GM12878 (cell line): ENCODE measurements at regions of chr3 and their contacts with region 1.

Region 1: GRCh38 chr3:141311496-141312353 is 56.6 kb upstream of the ZBTB38 start:
- DNase-seq: peak; percentile 92
- ATAC-seq: peak; percentile 96
- H3K4me3 ChIP-seq: peak overlapping the region; percentile 79
- H3K27ac ChIP-seq: peak overlapping the region; percentile 85
- H3K4me1 ChIP-seq: peaks cover 18% of the 10 kb centered on the region
- H3K27me3 ChIP-seq: no peaks in the 10 kb centered on the region
- CTCF ChIP-seq: peak; percentile 79 to 95 (median 81)
- EP300 ChIP-seq: no peak
- POLR2A ChIP-seq: peak; percentile 95
- RAD21 ChIP-seq: peak; percentile 83

Region 2: GRCh38 chr3:141336672-141337522 is 25.2 kb after region 1 on chr3:
- CTCF ChIA-PET with region 1: interaction called, 83 read pairs
- POLR2A ChIA-PET with region 1: interaction called, 8 read pairs
- RAD21 ChIA-PET with region 1: interaction called, 53 read pairs
- SMC1A ChIA-PET with region 1: interaction called, 112 read pairs
- in situ Hi-C with region 1: no loop called
- intact Hi-C with region 1: loop called (anchors 1 kb)
- DNase-seq: peak; percentile 95
- ATAC-seq: peak; percentile 90
- H3K4me3 ChIP-seq: peak overlapping the region; percentile 33
- H3K27ac ChIP-seq: peak overlapping the region; percentile 95
- H3K4me1 ChIP-seq: peaks cover 45% of the 10 kb centered on the region
- H3K27me3 ChIP-seq: no peaks in the 10 kb centered on the region
- CTCF ChIP-seq: no peak
- EP300 ChIP-seq: peak; percentile 27 to 98; a peak in 3 of 4 replicates
- POLR2A ChIP-seq: no peak
- RAD21 ChIP-seq: 0 out of 2 replicates have a peak, but pooled peaks have one; percentile 12

Region 3: GRCh38 chr3:141360888-141361598 is 49.3 kb after region 1 on chr3:
- CTCF ChIA-PET with region 1: interaction called, 155 read pairs
- POLR2A ChIA-PET with region 1: interaction called, 15 read pairs
- RAD21 ChIA-PET with region 1: interaction called, 119 read pairs
- SMC1A ChIA-PET with region 1: interaction called, 80 read pairs
- in situ Hi-C with region 1: no loop called
- intact Hi-C with region 1: loop called (anchors 1 kb)
- DNase-seq: no peak
- ATAC-seq: peak; percentile 87
- H3K4me3 ChIP-seq: peak overlapping the region; percentile 51; the same call in 1 of the 2 replicates
- H3K27ac ChIP-seq: peak overlapping the region; percentile 59
- H3K4me1 ChIP-seq: peaks cover 10% of the 10 kb centered on the region
- H3K27me3 ChIP-seq: no peaks in the 10 kb centered on the region
- CTCF ChIP-seq: peak; percentile 79 to 90 (median 82)
- EP300 ChIP-seq: no peak
- POLR2A ChIP-seq: no peak
- RAD21 ChIP-seq: peak; percentile 98

Region 4: DNA sequence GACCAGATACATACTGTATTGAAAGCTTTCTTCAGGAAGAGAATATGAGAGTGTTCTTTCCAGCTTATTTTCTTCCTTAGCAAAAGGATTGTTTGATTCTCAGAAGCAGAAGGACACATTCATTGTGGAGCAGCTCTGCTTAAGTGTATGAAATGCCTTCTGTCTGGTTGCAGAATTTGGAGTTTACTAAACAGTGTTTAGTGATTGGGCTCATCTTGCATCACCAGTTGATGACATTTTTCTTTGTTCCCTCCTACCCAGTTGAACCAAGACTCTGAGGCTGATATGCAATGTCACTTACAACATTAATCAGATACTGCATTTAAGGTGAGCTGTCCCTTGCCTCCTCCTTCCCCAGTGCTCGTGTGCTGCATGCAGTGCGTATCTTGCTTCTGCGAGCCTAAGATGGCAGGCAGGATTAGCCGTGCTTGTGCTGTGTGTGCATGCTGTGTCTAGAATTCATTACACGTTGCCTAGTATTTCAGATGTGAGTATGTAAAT is 74.9 kb after region 1 on chr3:
- CTCF ChIA-PET with region 1: interaction called, 24 read pairs
- POLR2A ChIA-PET with region 1: interaction called, 4 read pairs
- RAD21 ChIA-PET with region 1: interaction called, 18 read pairs
- SMC1A ChIA-PET with region 1: interaction called, 18 read pairs
- in situ Hi-C with region 1: no loop called
- intact Hi-C with region 1: no loop called
- DNase-seq: no peak
- ATAC-seq: peak; percentile 58
- H3K4me3 ChIP-seq: peak overlapping the region; percentile 67
- H3K27ac ChIP-seq: peak overlapping the region; percentile 94
- H3K4me1 ChIP-seq: peaks cover 30% of the 10 kb centered on the region
- H3K27me3 ChIP-seq: no peaks in the 10 kb centered on the region
- CTCF ChIP-seq: no peak
- EP300 ChIP-seq: no peak
- POLR2A ChIP-seq: peak; percentile 93
- RAD21 ChIP-seq: no peak

Region 5: GRCh38 chr3:141426404-141427034 is 114.8 kb after region 1 on chr3:
- CTCF ChIA-PET with region 1: interaction called, 10 read pairs
- POLR2A ChIA-PET with region 1: interaction called, 3 read pairs
- RAD21 ChIA-PET with region 1: interaction called, 3 read pairs
- SMC1A ChIA-PET with region 1: interaction called, 18 read pairs
- in situ Hi-C with region 1: no loop called
- intact Hi-C with region 1: no loop called
- DNase-seq: no peak
- ATAC-seq: no peak
- H3K4me3 ChIP-seq: no peak overlapping the region
- H3K27ac ChIP-seq: no peak overlapping the region
- H3K4me1 ChIP-seq: peaks cover 7% of the 10 kb centered on the region
- H3K27me3 ChIP-seq: no peaks in the 10 kb centered on the region
- CTCF ChIP-seq: no peak
- EP300 ChIP-seq: no peak
- POLR2A ChIP-seq: no peak
- RAD21 ChIP-seq: no peak

Region 6: DNA sequence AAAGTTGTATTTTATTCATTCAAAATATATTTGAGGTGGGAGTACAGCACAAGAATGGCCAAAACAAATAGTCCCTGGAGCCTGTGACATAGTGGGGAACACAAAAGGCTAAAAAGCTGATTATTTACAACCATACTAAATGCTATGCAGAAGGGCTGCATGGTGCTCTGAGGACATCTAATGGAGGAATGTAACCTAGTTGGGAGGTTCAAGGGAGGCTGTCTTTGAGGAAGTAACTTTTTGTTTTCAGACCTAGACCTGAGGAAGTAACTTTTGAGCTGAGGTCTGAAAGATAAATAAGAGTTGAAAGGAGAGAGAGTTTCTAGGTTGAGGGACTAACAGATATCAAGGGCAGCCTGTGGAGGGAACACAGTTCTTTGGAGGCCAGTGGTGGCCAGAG is 140.3 kb after region 1 on chr3:
- CTCF ChIA-PET with region 1: interaction called, 642 read pairs
- POLR2A ChIA-PET with region 1: interaction called, 33 read pairs
- RAD21 ChIA-PET with region 1: interaction called, 164 read pairs
- SMC1A ChIA-PET with region 1: interaction called, 405 read pairs
- in situ Hi-C with region 1: loop called (anchors 5 kb)
- intact Hi-C with region 1: loop called (anchors 1 kb)
- DNase-seq: peak; percentile 80
- ATAC-seq: peak; percentile 90
- H3K4me3 ChIP-seq: no peak overlapping the region
- H3K27ac ChIP-seq: no peak overlapping the region
- H3K4me1 ChIP-seq: no peaks in the 10 kb centered on the region; the same call in 1 of the 2 replicates
- H3K27me3 ChIP-seq: no peaks in the 10 kb centered on the region
- CTCF ChIP-seq: peak; percentile 75 to 95 (median 89)
- EP300 ChIP-seq: no peak
- POLR2A ChIP-seq: no peak
- RAD21 ChIP-seq: peak; percentile 100

Region 7: GRCh38 chr3:141511361-141511760 is 199.6 kb after region 1 on chr3:
- CTCF ChIA-PET with region 1: no interaction called
- POLR2A ChIA-PET with region 1: no interaction called
- RAD21 ChIA-PET with region 1: no interaction called
- SMC1A ChIA-PET with region 1: no interaction called
- in situ Hi-C with region 1: no loop called
- intact Hi-C with region 1: no loop called
- DNase-seq: no peak
- ATAC-seq: no peak
- H3K4me3 ChIP-seq: no peak overlapping the region
- H3K27ac ChIP-seq: no peak overlapping the region
- H3K4me1 ChIP-seq: no peaks in the 10 kb centered on the region
- H3K27me3 ChIP-seq: no peaks in the 10 kb centered on the region
- CTCF ChIP-seq: no peak
- EP300 ChIP-seq: no peak
- POLR2A ChIP-seq: no peak
- RAD21 ChIP-seq: no peak

Region 8: DNA sequence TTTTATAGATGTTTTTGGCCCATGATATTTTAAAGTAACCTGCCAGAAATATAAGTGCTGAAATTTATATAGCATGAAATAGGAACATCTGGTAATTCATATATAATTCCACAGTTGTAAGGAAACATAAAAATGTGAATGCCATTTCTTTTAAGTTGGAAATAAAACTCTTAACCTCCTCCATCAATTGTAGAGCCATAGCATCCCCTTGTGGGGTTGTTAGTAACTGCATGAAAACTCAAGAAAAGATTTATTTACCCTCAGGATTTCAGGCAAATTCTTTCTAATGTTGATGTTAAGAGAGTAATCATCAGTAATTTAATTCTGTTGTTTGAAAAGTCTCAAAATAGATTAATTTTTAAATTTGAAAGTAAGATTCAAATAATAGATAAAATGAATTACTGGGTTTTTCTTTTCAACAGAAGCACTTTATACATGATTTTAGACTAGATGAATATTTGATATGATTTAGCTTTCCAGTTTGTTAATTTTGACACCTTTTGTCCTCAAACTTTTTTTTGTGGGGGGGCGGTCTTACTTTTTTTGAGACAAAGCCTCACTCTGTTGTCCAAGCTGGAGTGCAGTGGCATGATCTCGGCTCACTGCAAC is 249.8 kb after region 1 on chr3:
- CTCF ChIA-PET with region 1: interaction called, 72 read pairs
- POLR2A ChIA-PET with region 1: no interaction called
- RAD21 ChIA-PET with region 1: interaction called, 6 read pairs
- SMC1A ChIA-PET with region 1: interaction called, 10 read pairs
- in situ Hi-C with region 1: loop called (anchors 5 kb)
- intact Hi-C with region 1: no loop called
- DNase-seq: no peak
- ATAC-seq: peak; percentile 45; the same call in 2 of the 3 replicates
- H3K4me3 ChIP-seq: no peak overlapping the region
- H3K27ac ChIP-seq: no peak overlapping the region
- H3K4me1 ChIP-seq: no peaks in the 10 kb centered on the region
- H3K27me3 ChIP-seq: no peaks in the 10 kb centered on the region
- CTCF ChIP-seq: peak; percentile 94 to 96 (median 94); a peak in 5 of 6 replicates
- EP300 ChIP-seq: no peak
- POLR2A ChIP-seq: no peak
- RAD21 ChIP-seq: peak; percentile 100